A673 (cell line): ENCODE measurements at regions of chr1 and their contacts with region 1.

Region 1: DNA sequence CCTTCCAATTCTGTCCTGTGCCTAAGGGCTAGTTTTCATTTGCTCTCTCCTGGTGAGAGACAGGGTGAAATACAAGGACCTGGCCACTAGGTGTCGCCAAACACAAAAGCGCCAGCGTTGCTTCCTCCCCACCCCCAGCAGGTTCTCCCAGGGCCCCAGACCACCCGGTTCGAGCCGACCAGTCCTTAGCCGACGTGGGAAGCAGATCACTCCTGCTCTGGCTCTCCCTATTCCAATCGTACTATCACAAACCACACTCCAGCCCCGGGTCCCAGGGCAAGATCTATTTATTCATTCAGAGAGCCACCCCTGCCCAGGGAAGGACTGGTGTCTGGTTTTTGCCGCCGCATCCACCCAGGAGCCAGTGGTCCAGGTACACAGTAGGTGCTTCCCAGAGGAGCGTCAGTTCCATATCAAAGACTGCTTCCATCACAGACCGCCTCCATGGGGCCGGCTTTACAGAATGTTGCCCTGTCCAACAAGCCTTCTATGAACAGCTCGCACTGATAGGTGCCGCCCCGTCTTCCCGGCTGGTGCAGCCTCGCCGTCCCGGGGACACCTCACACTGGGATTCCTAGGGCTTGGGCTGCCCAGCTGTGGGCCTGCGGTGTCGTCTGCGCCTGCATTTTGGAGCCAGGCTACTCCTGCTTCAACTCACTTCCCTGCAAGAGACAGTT is 35.0 kb downstream of the CTNNBIP1 start:
- DNase-seq: peak; percentile 87
- H3K4me3 ChIP-seq: peak overlapping the region; percentile 43
- H3K27ac ChIP-seq: no peak overlapping the region
- H3K4me1 ChIP-seq: peaks cover 10% of the 10 kb centered on the region
- H3K27me3 ChIP-seq: no peaks in the 10 kb centered on the region
- CTCF ChIP-seq: peak; percentile 95

Region 2: DNA sequence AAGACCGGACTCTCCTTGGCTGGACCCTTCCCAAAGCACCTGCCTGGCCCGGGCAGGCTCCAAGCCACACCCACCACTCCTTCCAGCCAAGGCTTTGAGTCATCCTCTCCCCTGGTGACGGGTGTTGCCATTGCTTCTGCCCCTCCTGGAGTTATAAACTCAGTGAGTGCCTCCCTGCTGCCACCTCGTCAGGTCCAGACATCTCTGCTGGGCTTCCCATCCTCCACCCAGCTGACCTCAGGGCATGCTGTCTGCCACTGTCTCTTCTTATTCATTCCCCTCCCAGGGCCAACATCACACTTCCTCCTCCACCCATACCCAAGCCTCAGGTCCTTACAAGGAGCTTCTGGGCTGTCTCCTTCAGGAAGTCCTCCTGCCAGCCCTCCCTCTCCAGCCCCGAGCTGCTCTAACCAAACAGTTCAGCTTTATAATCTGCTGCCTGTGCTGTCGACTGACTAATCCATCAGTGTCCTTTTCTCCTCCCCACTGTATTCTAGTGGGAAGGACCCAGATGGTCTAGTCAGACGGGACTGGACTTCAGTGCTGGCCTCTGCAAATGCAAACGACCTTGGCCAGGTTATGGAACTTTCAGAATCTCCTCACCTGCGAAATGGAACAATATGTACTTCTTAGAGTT is 49.5 kb before region 1 on chr1:
- CTCF ChIA-PET with region 1: interaction called, 12 read pairs
- POLR2A ChIA-PET with region 1: no interaction called
- intact Hi-C with region 1: no loop called
- DNase-seq: peak; percentile 58
- H3K4me3 ChIP-seq: no peak overlapping the region
- H3K27ac ChIP-seq: no peak overlapping the region
- H3K4me1 ChIP-seq: peaks cover 32% of the 10 kb centered on the region
- H3K27me3 ChIP-seq: no peaks in the 10 kb centered on the region
- CTCF ChIP-seq: no peak

Region 3: GRCh38 chr1:9890224-9890731 is 15.2 kb after region 1 on chr1:
- CTCF ChIA-PET with region 1: interaction called, 6 read pairs
- POLR2A ChIA-PET with region 1: interaction called, 12 read pairs
- intact Hi-C with region 1: no loop called
- DNase-seq: peak; percentile 97
- H3K4me3 ChIP-seq: no peak overlapping the region
- H3K27ac ChIP-seq: peak overlapping the region; percentile 77
- H3K4me1 ChIP-seq: peaks cover 61% of the 10 kb centered on the region
- H3K27me3 ChIP-seq: no peaks in the 10 kb centered on the region
- CTCF ChIP-seq: no peak

Region 4: GRCh38 chr1:9942939-9943788 is 68.1 kb after region 1 on chr1 and contains the starts of genes LZIC and NMNAT1:
- CTCF ChIA-PET with region 1: no interaction called
- POLR2A ChIA-PET with region 1: no interaction called
- intact Hi-C with region 1: loop called (anchors 1 kb)
- DNase-seq: peak; percentile 94
- H3K4me3 ChIP-seq: peak within 1 kb of the TSS; percentile 90
- H3K27ac ChIP-seq: peak within 1 kb of the TSS; percentile 87
- H3K4me1 ChIP-seq: peaks cover 5% of the 10 kb centered on the region
- H3K27me3 ChIP-seq: no peaks in the 10 kb centered on the region
- CTCF ChIP-seq: no peak
- total RNA-seq, gene LZIC: 53.7 and 56.5 TPM in 2 replicates
- total RNA-seq, gene NMNAT1: 4.3 and 4.5 TPM in 2 replicates

Region 5: GRCh38 chr1:10032590-10033358 is 157.7 kb after region 1 on chr1 and contains the start of gene UBE4B:
- CTCF ChIA-PET with region 1: no interaction called
- POLR2A ChIA-PET with region 1: no interaction called
- intact Hi-C with region 1: loop called (anchors 5 kb)
- DNase-seq: peak; percentile 99
- H3K4me3 ChIP-seq: peak within 1 kb of the TSS; percentile 75
- H3K27ac ChIP-seq: peak within 1 kb of the TSS; percentile 88
- H3K4me1 ChIP-seq: peaks cover 4% of the 10 kb centered on the region
- H3K27me3 ChIP-seq: no peaks in the 10 kb centered on the region
- CTCF ChIP-seq: peak; percentile 80
- total RNA-seq, gene UBE4B: 58.0 and 59.4 TPM in 2 replicates

Region 6: GRCh38 chr1:10430216-10431069 is 555.3 kb after region 1 on chr1 and contains the start of gene CENPS:
- CTCF ChIA-PET with region 1: no interaction called
- POLR2A ChIA-PET with region 1: no interaction called
- intact Hi-C with region 1: loop called (anchors 5 kb)
- DNase-seq: peak; percentile 96
- H3K4me3 ChIP-seq: peak within 1 kb of the TSS; percentile 90
- H3K27ac ChIP-seq: peak within 1 kb of the TSS; percentile 90
- H3K4me1 ChIP-seq: peaks cover 5% of the 10 kb centered on the region
- H3K27me3 ChIP-seq: no peaks in the 10 kb centered on the region
- CTCF ChIP-seq: peak; percentile 83
- total RNA-seq, gene CENPS: 37.7 and 42.2 TPM in 2 replicates